ENCODE measurements at regions of chr9 and their contacts with region 1.

Region 1: GRCh38 chr9:36441966-36442365 is 41.9 kb upstream of the RNF38 start:
- DNase-seq: no peak
- H3K4me3 ChIP-seq: no peak overlapping the region
- H3K4me1 ChIP-seq: peaks cover 41% of the 10 kb centered on the region
- H3K27me3 ChIP-seq: no peaks in the 10 kb centered on the region

Region 2: GRCh38 chr9:36357639-36358038 is 84.3 kb before region 1 on chr9:
- in situ Hi-C with region 1: no loop called
- DNase-seq: no peak
- H3K4me3 ChIP-seq: no peak overlapping the region
- H3K4me1 ChIP-seq: no peaks in the 10 kb centered on the region
- H3K27me3 ChIP-seq: no peaks in the 10 kb centered on the region

Region 3: DNA sequence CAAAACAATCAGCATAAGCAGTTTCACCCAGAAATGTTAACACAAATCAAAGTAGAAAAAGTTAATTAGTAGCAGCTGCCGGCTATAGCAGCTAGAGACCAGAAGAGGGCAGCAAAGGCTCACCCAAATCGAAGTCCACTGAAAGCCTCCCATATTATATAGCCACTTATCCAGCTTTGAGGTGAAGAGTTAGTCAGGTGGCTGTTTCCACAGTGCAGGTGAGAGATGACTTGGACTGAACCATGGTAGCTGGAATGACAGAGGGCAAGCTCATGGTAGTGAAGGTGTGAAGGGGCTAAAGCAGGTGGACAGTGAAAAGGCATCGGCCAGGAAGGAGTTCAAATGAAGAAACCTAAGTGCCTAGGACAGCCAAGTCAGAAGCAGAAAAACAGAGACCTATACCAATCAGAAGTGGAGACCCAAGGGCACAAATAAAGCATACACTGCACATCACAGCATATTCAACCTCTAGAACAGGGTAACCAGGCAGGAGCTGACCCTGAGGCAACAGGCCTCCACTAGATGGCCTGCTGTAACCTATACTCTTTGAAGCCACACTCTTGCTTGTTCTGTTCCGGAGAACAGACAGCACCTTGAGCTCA is 34.7 kb before region 1 on chr9:
- in situ Hi-C with region 1: loop called (anchors 5 kb)
- DNase-seq: peak; percentile 69
- H3K4me3 ChIP-seq: no peak overlapping the region
- H3K4me1 ChIP-seq: no peaks in the 10 kb centered on the region
- H3K27me3 ChIP-seq: no peaks in the 10 kb centered on the region